Activated CD8-positive, alpha-beta T cell treated with anti-CD3 and anti-CD28 coated beads, Interleukin-2, amount 10 ng/mL, durations not matched to agents 7 days and 5 days (primary cell): ENCODE measurements at regions of chr19 and their contacts with region 1.

Region 1: DNA sequence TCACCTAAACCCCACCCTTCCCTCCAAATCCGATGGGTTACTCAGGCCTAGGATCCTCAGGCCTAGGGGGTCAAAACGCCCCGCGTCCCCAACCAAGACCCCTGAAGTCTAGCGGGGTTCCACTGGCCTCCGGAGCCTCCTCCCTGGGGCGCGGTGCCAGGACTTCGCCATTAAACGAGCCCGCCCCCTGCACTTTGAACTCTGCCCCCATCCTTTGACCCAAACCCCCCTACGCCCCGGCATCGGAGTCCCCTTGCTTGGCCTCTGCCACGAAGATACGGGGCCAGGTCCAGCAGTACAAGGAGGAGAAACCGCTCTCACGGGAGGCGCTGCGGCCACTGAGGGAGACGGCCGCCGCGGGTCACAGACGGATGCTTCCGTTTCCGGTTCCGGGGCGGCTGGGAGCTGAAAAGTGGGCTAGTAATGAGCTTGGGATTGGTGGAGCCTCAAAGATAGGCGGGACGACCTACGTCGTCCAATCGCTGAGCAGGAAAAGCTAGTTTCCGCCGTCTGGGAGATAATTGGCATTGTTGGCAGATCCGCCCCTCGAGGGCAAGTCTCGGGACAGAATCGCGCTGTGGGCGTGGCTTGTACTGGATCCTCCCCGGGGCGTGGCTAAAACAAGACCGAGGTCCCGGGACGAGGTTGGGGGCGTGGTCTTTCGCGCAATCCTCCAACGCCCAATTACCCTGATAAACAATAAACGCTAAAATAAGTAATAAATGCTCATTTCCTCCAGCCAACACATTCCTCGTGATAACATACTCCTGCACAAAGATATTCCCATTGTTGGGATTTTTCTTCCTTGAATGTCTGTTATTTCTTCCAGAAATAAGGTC is 5.7 kb upstream of the ZNF77 start:
- DNase-seq: peak; percentile 100
- ATAC-seq: peak; percentile 99
- H3K4me3 Mint-ChIP-seq: peak overlapping the region; percentile 97
- H3K27ac Mint-ChIP-seq: peak overlapping the region; percentile 96
- H3K4me1 Mint-ChIP-seq: peaks cover 35% of the 10 kb centered on the region
- H3K27me3 Mint-ChIP-seq: no peaks in the 10 kb centered on the region

Region 2: DNA sequence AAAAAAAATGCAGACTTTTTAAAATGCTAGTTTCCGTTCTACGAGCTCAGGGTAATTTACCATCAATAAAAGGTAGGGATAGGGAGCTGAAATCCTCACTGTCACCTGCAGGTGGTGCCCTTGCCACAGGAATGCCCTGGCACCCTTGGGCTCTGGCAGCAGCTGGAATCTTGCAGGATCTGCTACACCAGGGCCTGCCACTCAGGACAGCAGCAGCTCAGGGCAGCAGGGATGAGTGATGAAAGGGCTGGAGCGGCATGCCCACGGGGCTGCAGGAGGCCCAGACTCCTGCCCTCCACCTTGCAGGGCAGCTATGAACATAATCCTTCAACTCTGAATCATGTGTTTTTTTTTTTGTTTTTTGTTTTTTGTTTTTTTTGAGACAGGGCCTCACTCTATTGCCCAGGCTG is 302.0 kb before region 1 on chr19:
- CTCF ChIA-PET with region 1: interaction called, 16 read pairs
- POLR2A ChIA-PET with region 1: no interaction called
- DNase-seq: peak; percentile 80
- ATAC-seq: peak; percentile 91
- H3K4me3 Mint-ChIP-seq: no peak overlapping the region
- H3K27ac Mint-ChIP-seq: no peak overlapping the region
- H3K4me1 Mint-ChIP-seq: no peaks in the 10 kb centered on the region
- H3K27me3 Mint-ChIP-seq: no peaks in the 10 kb centered on the region

Region 3: DNA sequence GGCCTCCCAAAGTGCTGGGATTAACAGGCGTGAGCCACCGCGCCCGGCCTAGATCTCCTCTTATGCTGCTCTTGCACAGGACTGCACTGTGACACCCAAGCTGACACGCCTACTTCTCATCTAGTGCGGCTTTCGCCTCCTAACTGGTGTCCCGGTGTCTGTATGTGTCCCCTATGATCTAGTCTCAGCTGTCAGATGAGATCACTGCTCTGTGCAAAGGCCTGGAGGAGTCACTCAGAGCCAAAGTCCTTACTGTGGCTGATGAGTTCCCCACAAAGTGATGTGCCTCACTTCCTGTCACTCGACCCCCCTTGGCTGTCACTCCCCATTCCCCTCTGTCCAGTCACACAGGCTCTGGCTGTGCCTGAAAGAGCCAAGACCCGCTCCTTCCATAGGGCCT is 80.9 kb before region 1 on chr19:
- CTCF ChIA-PET with region 1: no interaction called
- POLR2A ChIA-PET with region 1: no interaction called
- DNase-seq: no peak
- ATAC-seq: no peak
- H3K4me3 Mint-ChIP-seq: no peak overlapping the region
- H3K27ac Mint-ChIP-seq: no peak overlapping the region
- H3K4me1 Mint-ChIP-seq: peaks cover 2% of the 10 kb centered on the region
- H3K27me3 Mint-ChIP-seq: peaks cover 3% of the 10 kb centered on the region

Region 4: DNA sequence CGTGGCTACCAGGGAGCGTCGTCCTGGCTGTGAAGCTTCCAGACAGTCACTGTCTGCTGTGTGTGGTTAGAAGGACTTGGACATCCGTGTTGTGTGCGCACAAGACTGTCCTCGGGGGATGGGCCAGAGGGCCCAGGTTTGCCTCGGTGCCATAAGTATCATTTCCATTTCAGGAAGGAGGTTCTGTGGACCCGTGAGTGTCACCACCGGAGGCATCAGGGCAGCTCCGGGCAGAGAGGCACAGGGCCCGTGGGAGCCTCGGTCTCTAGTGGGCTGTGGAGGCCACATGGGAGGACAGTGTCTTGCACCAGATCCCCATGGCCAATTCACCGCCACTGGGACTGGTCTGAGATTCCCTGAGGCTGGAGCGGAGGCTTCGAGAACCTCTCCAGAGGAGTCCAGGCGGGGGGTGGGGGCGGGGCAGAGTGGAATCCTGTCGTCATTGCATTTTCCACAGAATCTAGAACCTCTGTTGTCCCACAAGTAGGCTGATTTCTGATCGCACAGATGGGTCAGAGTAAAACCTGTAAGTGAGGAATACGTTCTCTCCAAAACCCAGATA is 43.8 kb before region 1 on chr19:
- CTCF ChIA-PET with region 1: interaction called, 11 read pairs
- POLR2A ChIA-PET with region 1: no interaction called
- DNase-seq: no peak
- ATAC-seq: no peak
- H3K4me3 Mint-ChIP-seq: no peak overlapping the region
- H3K27ac Mint-ChIP-seq: no peak overlapping the region
- H3K4me1 Mint-ChIP-seq: peaks cover 15% of the 10 kb centered on the region
- H3K27me3 Mint-ChIP-seq: no peaks in the 10 kb centered on the region

Region 5: DNA sequence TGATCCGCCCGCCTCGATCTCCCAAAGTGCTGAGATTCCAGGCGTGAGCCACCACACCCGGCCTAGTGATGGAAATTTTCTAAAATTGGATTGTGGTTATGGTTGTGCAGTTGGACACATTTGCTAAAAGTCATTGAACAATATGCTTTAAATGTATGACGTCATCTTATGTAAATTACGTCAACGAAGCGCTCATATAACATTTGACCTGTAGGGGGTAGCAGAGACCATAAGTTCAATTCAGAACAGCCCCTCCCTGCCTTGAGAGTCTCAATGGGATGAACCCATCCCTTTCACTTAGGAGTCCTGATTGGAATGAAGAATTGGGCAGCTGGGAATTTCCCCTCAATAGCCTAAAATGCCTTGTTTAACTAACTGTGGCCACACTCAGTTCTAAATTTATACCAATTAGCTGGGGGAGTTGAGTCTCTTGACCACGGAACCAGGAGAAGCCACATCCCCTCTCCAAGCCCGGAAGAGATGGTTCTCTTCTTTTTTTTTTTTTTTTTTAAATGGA is 11.6 kb after region 1 on chr19:
- CTCF ChIA-PET with region 1: interaction called, 46 read pairs
- POLR2A ChIA-PET with region 1: no interaction called
- DNase-seq: peak; percentile 75
- ATAC-seq: peak; percentile 79
- H3K4me3 Mint-ChIP-seq: peak overlapping the region; percentile 59
- H3K27ac Mint-ChIP-seq: peak overlapping the region; percentile 49
- H3K4me1 Mint-ChIP-seq: peaks cover 5% of the 10 kb centered on the region
- H3K27me3 Mint-ChIP-seq: no peaks in the 10 kb centered on the region

Region 6: GRCh38 chr19:3035542-3036118 is 85.1 kb after region 1 on chr19:
- CTCF ChIA-PET with region 1: interaction called, 15 read pairs
- POLR2A ChIA-PET with region 1: interaction called, 3 read pairs
- DNase-seq: peak; percentile 98
- ATAC-seq: peak; percentile 94
- H3K4me3 Mint-ChIP-seq: peak overlapping the region; percentile 87
- H3K27ac Mint-ChIP-seq: peak overlapping the region; percentile 95
- H3K4me1 Mint-ChIP-seq: peaks cover 30% of the 10 kb centered on the region
- H3K27me3 Mint-ChIP-seq: peaks cover 30% of the 10 kb centered on the region

Region 7: GRCh38 chr19:3125900-3126524 is 175.5 kb after region 1 on chr19:
- CTCF ChIA-PET with region 1: interaction called, 16 read pairs
- POLR2A ChIA-PET with region 1: no interaction called
- DNase-seq: peak; percentile 64
- ATAC-seq: peak; percentile 95
- H3K4me3 Mint-ChIP-seq: no peak overlapping the region
- H3K27ac Mint-ChIP-seq: no peak overlapping the region
- H3K4me1 Mint-ChIP-seq: peaks cover 12% of the 10 kb centered on the region
- H3K27me3 Mint-ChIP-seq: peaks cover 3% of the 10 kb centered on the region